SK-N-SH (cell line): ENCODE measurements at regions of chr2 and their contacts with region 1.

Region 1: DNA sequence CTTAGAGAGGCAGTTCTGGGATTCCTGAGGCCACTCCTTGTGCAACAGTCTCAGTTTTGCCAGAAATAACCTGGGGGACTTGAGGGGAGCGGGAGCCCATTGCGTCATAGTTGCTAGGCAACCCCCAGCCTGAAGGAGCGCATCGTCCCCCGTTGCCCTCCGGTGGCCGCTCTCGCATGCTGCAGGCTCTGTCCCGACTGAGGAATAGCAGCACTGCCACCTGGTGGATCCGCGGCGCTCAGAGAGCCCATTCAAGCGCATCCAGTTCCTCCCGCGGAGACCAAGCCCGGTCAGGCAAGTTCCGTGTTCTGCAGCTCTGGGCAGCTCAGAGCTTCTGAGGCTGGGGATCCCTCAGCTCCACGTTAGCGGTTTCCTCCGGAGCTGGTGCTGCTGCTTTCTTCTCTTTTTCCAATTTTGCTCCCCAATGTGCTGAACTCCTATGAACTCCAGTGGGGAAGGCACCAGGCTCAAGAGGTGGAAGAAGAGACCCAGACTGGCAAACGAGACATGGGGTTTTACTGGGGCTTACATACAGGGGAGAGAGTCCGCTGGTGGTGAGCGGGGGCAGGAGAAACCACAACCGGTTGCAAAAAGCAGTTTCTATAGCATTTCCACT is 15.1 kb downstream of the SLC4A3 start:
- DNase-seq: peak; percentile 95
- H3K4me3 ChIP-seq: peak overlapping the region in 1 of 2 experiments; percentile 39; a peak in 1 of 4 replicates
- H3K27ac ChIP-seq: no peak overlapping the region
- H3K4me1 ChIP-seq: peaks cover 13 to 20% of the 10 kb centered on the region in 2 experiments; a peak in 3 of 4 replicates
- H3K27me3 ChIP-seq: no peaks in the 10 kb centered on the region; the same call in 1 of the 2 replicates
- CTCF ChIP-seq: peak; percentile 98
- EP300 ChIP-seq: no peak
- RAD21 ChIP-seq: peak; percentile 93

Region 2: DNA sequence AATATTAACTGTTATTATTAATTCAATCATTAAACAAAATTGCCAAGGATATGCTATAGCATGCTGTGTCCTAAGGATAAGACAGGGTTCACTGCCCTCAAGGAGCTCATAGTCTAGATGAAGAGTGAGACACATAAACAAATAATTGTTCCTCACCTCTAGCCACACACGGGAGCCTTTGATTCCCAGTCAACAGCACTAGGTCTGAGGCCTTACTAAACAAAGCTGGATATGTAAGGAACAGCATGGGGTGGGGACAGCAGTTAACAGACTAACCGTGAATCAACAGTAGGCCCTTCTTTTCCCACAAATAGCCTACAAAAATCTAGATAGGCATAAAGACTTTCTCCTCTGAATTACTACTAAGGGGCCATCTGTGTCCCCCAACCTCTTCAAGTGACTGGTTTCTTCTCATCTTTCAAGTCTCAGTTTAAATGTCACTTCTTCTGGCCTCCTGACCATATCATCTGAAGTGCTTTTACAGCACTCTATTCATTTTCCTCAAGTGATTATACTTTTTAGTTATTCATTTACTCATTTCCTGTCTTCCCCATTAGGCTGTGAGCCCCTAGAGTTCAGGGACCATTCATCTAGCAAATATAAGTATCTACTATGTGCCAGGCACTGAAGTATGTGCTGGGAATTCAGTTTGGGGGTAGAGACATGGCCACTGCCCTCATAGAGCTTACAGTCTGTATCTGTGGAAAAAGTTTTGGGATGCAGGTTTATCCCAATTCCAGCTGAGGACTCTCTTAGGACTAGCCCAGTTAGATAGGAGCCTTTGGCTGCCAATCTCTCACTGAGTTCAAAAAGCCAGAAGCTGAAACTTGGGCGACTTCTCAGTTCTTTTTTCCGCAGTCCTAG is 551.9 kb before region 1 on chr2:
- CTCF ChIA-PET with region 1: no interaction called
- POLR2A ChIA-PET with region 1: no interaction called
- DNase-seq: no peak
- H3K4me3 ChIP-seq: no peak overlapping the region
- H3K27ac ChIP-seq: no peak overlapping the region
- H3K4me1 ChIP-seq: no peaks in the 10 kb centered on the region; a peak in 1 of 4 replicates
- H3K27me3 ChIP-seq: no peaks in the 10 kb centered on the region
- CTCF ChIP-seq: no peak
- EP300 ChIP-seq: no peak
- RAD21 ChIP-seq: no peak

Region 3: GRCh38 chr2:219352448-219353023 is 290.0 kb before region 1 on chr2:
- CTCF ChIA-PET with region 1: no interaction called
- POLR2A ChIA-PET with region 1: no interaction called
- DNase-seq: peak; percentile 79
- H3K4me3 ChIP-seq: no peak overlapping the region
- H3K27ac ChIP-seq: no peak overlapping the region
- H3K4me1 ChIP-seq: no peaks in the 10 kb centered on the region
- H3K27me3 ChIP-seq: peaks cover 8% of the 10 kb centered on the region
- CTCF ChIP-seq: peak; percentile 79
- EP300 ChIP-seq: no peak
- RAD21 ChIP-seq: peak; percentile 67

Region 4: GRCh38 chr2:219552382-219553167 is 90.0 kb before region 1 on chr2:
- CTCF ChIA-PET with region 1: interaction called, 19 read pairs
- POLR2A ChIA-PET with region 1: no interaction called
- DNase-seq: peak; percentile 96
- H3K4me3 ChIP-seq: peak overlapping the region; percentile 67 to 74
- H3K27ac ChIP-seq: peak overlapping the region; percentile 36 to 80; a peak in 3 of 4 replicates
- H3K4me1 ChIP-seq: peaks cover 0 to 27% of the 10 kb centered on the region in 2 experiments; a peak in 1 of 4 replicates
- H3K27me3 ChIP-seq: no peaks in the 10 kb centered on the region
- CTCF ChIP-seq: no peak
- EP300 ChIP-seq: no peak
- RAD21 ChIP-seq: no peak

Region 5: GRCh38 chr2:219571311-219572236 is 71.0 kb before region 1 on chr2 and contains the start of gene OBSL1:
- CTCF ChIA-PET with region 1: interaction called, 13 read pairs
- POLR2A ChIA-PET with region 1: interaction called, 3 read pairs
- DNase-seq: peak; percentile 97
- H3K4me3 ChIP-seq: peak within 1 kb of the TSS; percentile 65 to 82
- H3K27ac ChIP-seq: peak within 1 kb of the TSS; percentile 36 to 76
- H3K4me1 ChIP-seq: peaks cover 3 to 21% of the 10 kb centered on the region in 2 experiments; a peak in 1 of 4 replicates
- H3K27me3 ChIP-seq: no peaks in the 10 kb centered on the region
- CTCF ChIP-seq: no peak
- EP300 ChIP-seq: peak in 1 of 2 experiments; percentile 55; a peak in 1 of 4 replicates
- RAD21 ChIP-seq: no peak; the same call in 1 of the 2 replicates
- polyA plus RNA-seq, gene OBSL1: 70.9 and 93.0 TPM in 2 replicates

Region 6: DNA sequence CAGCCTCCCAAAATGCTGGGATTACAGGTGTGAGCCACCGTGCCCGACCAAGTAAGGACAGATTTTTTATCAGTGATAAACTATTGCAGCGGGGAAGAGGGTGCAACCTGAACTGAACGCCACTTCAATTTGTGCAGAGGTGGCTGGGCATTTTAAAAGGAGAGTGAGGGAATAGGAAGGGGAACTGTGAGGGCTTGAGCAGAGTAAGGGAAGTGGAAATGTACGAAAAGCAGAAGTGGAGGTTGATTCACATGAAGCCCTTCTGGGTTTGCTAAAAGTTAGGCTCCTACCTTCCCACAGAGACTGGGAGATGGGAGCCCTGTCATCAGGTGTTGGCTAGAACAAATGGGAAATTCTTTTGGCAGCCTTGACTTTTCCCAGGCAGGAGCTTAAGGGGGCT is 38.8 kb before region 1 on chr2:
- CTCF ChIA-PET with region 1: interaction called, 22 read pairs
- POLR2A ChIA-PET with region 1: no interaction called
- DNase-seq: no peak
- H3K4me3 ChIP-seq: no peak overlapping the region
- H3K27ac ChIP-seq: no peak overlapping the region
- H3K4me1 ChIP-seq: no peaks in the 10 kb centered on the region; a peak in 1 of 4 replicates
- H3K27me3 ChIP-seq: no peaks in the 10 kb centered on the region
- CTCF ChIP-seq: no peak
- EP300 ChIP-seq: no peak
- RAD21 ChIP-seq: no peak

Region 7: DNA sequence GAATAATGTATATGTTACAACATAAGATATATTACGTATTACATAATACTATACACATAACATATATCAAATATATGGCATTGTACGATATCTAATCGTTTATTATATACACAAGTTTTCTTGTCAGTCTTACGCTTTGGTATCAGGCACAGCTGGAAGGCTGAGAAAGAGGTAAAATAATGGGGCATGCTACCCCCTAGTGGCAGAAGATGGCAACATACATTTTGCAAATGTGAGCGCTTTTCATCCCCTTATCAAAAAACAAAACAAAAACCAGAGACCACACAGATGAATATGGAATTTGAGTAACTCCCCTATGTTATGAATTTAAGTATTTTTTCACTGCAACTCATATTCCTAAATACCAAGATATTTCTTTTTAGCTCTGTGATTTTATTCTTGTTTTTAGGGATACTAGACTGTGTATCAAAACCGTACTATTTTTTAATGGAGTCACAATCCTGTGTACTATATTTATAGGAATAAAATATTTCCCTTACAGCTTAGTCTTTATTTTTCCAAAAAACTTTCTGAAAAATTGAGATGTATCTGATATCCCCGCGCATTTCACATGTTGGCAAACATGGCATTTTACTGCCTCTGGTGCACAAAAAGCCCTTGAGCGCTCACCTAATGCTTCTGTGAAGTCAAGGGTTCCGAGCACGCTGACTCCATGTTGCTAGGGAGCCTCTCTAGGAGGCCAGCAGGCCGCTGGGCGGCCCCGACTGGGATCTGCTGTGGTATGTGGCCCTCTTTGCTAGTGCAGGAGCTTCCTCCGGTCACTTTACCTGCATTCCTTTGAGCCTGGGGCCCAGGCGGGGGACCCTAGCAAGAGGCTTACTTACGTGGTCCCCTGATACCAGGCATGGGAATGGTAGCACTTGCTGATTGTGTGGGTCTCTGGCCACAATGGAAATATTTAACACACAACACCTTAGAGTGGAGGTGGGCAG is 47.4 kb after region 1 on chr2:
- CTCF ChIA-PET with region 1: interaction called, 27 read pairs
- POLR2A ChIA-PET with region 1: no interaction called
- DNase-seq: peak; percentile 60
- H3K4me3 ChIP-seq: no peak overlapping the region
- H3K27ac ChIP-seq: no peak overlapping the region
- H3K4me1 ChIP-seq: peaks cover 2 to 7% of the 10 kb centered on the region in 2 experiments; a peak in 2 of 4 replicates
- H3K27me3 ChIP-seq: peaks cover 15% of the 10 kb centered on the region; the same call in 1 of the 2 replicates
- CTCF ChIP-seq: peak; percentile 79
- EP300 ChIP-seq: no peak
- RAD21 ChIP-seq: peak; percentile 80

Region 8: GRCh38 chr2:219701847-219702634 is 59.5 kb after region 1 on chr2:
- CTCF ChIA-PET with region 1: no interaction called
- POLR2A ChIA-PET with region 1: no interaction called
- DNase-seq: no peak
- H3K4me3 ChIP-seq: no peak overlapping the region
- H3K27ac ChIP-seq: no peak overlapping the region
- H3K4me1 ChIP-seq: no peaks in the 10 kb centered on the region
- H3K27me3 ChIP-seq: peaks cover 37% of the 10 kb centered on the region
- CTCF ChIP-seq: no peak
- EP300 ChIP-seq: no peak
- RAD21 ChIP-seq: no peak